ENCODE measurements at regions of chr17 and their contacts with region 1.

Region 1: GRCh38 chr17:6413065-6413464 is 21.9 kb downstream of the AIPL1 start:
- DNase-seq: peak; percentile 41
- H3K4me3 ChIP-seq: no peak overlapping the region
- H3K27ac ChIP-seq: no peak overlapping the region
- H3K4me1 ChIP-seq: no peaks in the 10 kb centered on the region
- H3K27me3 ChIP-seq: peaks cover 4% of the 10 kb centered on the region
- CTCF ChIP-seq: peak; percentile 54 to 67

Region 2: DNA sequence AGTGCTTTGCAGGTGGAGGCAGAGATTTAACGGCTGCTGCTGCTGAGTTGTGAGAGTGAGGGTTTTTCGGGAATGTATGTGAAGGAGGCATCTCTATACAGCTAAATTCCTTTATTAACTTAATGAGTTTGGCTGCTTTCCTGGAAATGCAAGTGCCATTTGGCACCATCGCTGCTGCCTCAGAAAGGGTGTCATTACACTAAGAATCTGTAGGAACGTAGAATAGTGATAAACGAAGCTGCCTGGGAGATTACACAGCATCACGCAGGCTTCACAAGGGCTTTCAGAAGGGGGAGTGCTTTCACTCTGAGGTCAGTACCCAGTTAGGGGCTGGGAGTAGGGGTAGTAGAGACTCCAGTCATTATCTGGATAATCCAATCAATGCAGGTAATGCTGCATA is 814.6 kb before region 1 on chr17:
- CTCF ChIA-PET with region 1: no interaction called
- dilution Hi-C with region 1: loop called (anchors 5 kb)
- in situ Hi-C with region 1: loop called in 1 of 2 experiments (anchors 10 kb)
- intact Hi-C with region 1: no loop called
- DNase-seq: no peak
- H3K4me3 ChIP-seq: no peak overlapping the region
- H3K27ac ChIP-seq: no peak overlapping the region
- H3K4me1 ChIP-seq: no peaks in the 10 kb centered on the region
- H3K27me3 ChIP-seq: peaks cover 5% of the 10 kb centered on the region
- CTCF ChIP-seq: no peak

Region 3: GRCh38 chr17:6323582-6324356 is 89.3 kb before region 1 on chr17:
- CTCF ChIA-PET with region 1: no interaction called
- dilution Hi-C with region 1: loop called (anchors 5 kb)
- in situ Hi-C with region 1: no loop called
- intact Hi-C with region 1: no loop called
- DNase-seq: peak; percentile 8
- H3K4me3 ChIP-seq: no peak overlapping the region
- H3K27ac ChIP-seq: no peak overlapping the region
- H3K4me1 ChIP-seq: no peaks in the 10 kb centered on the region
- H3K27me3 ChIP-seq: peaks cover 1% of the 10 kb centered on the region
- CTCF ChIP-seq: no peak

Region 4: GRCh38 chr17:6346156-6346786 is 66.8 kb before region 1 on chr17:
- CTCF ChIA-PET with region 1: no interaction called
- dilution Hi-C with region 1: no loop called
- in situ Hi-C with region 1: no loop called
- intact Hi-C with region 1: no loop called
- DNase-seq: no peak
- H3K4me3 ChIP-seq: no peak overlapping the region
- H3K27ac ChIP-seq: no peak overlapping the region
- H3K4me1 ChIP-seq: no peaks in the 10 kb centered on the region
- H3K27me3 ChIP-seq: no peaks in the 10 kb centered on the region
- CTCF ChIP-seq: no peak

Region 5: DNA sequence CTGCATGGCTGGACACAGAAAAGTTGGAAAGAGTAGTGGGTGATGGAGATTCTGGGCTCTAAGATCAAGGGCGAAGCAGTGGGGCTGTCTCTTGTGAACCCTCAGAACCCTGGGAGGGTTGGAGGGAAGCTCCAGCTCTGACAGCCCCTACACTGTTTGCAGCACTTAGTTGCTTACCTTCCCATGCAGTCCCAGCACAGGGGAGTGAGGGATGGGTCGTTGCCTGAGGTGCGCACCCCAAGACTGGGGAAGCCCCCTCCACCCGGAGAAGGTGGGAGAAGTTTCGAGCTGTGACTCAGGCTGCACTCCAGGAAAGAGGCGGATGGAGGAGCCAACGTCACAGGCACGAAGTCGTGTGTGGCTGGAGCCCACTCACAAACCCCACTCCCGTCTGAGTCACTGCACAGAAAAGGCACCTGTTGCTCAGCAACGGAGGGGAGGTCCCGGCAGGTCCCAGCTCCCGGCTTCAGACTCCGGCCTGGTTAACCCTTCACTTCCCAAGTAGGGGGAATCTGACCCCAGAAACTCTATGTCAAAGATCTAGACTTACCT is 38.2 kb before region 1 on chr17:
- CTCF ChIA-PET with region 1: no interaction called
- dilution Hi-C with region 1: loop called (anchors 5 kb)
- in situ Hi-C with region 1: no loop called
- intact Hi-C with region 1: no loop called
- DNase-seq: peak; percentile 93
- H3K4me3 ChIP-seq: peak overlapping the region in 1 of 3 experiments; percentile 1
- H3K27ac ChIP-seq: peak overlapping the region; percentile 74
- H3K4me1 ChIP-seq: peaks cover 19% of the 10 kb centered on the region
- H3K27me3 ChIP-seq: no peaks in the 10 kb centered on the region
- CTCF ChIP-seq: no peak

Measured in mammary epithelial cell (primary cell).